GM13976 (cell line): ENCODE measurements at regions of chr12 and their contacts with region 1.

Region 1: DNA sequence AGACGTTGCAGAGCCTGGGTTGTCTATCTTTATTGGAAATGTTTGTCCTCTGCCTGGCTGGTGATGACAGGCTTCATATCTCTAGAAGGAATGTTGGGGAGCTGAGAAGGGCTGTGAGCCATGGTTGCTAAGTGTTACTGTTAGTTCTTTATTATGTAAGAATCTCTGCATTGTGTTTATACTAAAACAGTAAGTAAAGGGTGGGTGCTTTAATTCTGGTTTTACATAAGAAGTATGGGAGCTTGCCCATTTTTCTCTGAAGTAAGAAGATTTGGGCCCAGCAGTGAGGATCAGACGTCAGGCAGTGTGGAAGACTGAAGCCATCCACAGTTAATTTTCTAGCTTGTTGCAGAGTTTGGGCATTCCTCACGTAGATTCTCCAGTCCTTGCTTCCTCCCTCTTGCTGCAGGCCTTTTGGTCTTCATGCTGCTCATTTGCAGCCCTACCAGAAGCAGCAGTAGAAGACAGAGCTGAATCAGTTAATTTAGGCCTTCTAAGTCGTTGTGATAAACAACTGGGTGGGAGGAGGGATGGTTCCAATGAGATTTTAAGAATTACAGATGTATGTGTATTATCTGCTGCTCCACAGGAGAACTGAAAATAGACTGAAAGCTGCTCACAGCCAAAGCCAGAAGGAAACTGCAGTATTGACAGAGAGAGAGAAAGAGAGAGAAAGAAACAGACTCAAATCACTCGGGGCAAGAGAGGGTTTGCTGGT is 21.4 kb downstream of the WNT5B start:
- DNase-seq: no peak
- CTCF ChIP-seq: no peak

Region 2: DNA sequence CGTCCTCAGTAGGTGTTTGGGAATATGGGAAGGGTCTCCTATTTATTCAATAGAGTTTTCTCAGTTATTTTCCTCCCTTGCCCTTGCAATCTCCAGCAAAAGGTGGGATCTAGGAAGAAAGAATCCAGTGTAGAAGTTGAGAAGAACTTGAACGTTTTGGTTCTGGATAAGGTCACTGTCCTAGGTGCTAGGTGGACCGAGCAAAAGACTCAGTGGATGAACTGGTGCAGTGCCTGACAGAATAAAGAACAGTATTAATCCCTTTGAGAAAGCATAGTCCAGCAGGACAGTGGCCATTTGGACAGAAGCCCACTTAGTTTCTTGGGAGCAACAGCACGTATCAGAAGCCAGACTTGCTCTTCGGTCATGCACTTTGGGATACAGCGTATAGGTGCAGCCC is 137.3 kb after region 1 on chr12:
- in situ Hi-C with region 1: loop called (anchors 5 kb)
- DNase-seq: no peak
- CTCF ChIP-seq: no peak

Region 3: GRCh38 chr12:1939801-1940607 is 289.6 kb after region 1 on chr12:
- in situ Hi-C with region 1: loop called (anchors 10 kb)
- DNase-seq: peak; percentile 84
- CTCF ChIP-seq: peak; percentile 94

Region 4: DNA sequence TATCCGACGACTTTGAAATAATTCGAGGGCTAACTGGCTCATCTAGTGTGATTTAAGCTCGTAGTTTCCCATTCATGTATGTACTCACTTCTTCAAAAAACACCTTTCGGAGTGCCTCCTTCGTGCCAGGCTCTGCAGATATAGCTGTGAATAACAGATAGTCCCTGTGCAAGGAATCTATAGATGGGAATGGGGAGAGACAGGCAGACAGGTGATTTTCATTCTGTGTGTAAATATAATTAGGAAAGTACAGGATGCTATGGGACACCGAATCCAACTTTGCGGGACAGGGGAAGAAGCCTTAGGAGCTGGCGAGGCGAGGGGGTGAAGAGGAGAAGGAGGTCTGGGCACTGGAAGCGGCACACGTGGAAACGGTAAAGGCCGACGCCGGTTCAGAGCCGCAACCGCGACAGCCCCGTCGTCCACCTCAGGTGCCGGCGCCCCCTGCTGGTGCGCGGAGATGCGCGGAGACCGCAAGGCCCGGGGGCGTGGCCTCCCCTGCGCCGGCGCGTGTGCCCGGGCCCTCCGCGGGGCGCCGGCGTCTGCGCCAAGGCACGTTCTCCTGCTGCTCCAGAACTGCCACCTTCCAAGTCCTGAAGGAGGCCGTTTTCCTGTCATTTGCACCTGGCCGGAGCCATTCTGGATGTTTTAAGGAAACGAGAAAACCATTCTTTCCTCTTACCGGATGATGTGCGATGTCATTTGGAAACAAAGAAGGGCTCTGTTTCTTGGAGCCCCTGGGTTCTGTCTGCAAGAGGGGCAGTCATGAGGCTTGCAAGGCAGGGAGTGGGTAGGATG is 384.4 kb after region 1 on chr12:
- in situ Hi-C with region 1: no loop called
- DNase-seq: peak; percentile 94
- CTCF ChIP-seq: peak; percentile 96